ENCODE measurements at regions of chr9 and their contacts with region 1.

Region 1: DNA sequence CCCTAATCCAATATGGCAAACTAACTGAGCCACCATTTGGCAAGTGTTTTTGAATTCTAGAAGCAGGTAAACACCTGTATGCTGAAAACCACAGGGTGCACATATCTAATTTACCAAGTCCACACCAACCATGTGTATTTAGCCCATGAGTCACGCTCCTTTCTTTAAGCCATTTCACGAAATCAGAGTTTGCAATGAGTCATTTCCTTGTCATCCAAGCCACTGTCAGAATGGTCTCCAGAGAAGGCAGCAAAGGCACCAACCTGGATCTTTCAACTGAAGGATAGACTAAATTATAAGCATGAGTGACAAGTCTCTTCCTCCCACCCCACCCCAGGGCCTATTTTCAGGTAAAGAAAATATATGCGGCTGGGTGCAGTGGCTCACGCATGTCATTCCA is 110.0 kb downstream of the PAX5 start:
- DNase-seq: no peak
- H3K4me3 ChIP-seq: no peak overlapping the region
- H3K27ac ChIP-seq: no peak overlapping the region
- H3K4me1 ChIP-seq: no peaks in the 10 kb centered on the region
- H3K27me3 ChIP-seq: no peaks in the 10 kb centered on the region
- CTCF ChIP-seq: no peak
- POLR2A ChIP-seq: no peak

Region 2: GRCh38 chr9:36847781-36848673 is 76.0 kb before region 1 on chr9:
- intact Hi-C with region 1: loop called (anchors 10 kb)
- DNase-seq: no peak
- H3K4me3 ChIP-seq: no peak overlapping the region
- H3K27ac ChIP-seq: no peak overlapping the region
- H3K4me1 ChIP-seq: no peaks in the 10 kb centered on the region
- H3K27me3 ChIP-seq: no peaks in the 10 kb centered on the region
- CTCF ChIP-seq: no peak
- POLR2A ChIP-seq: no peak

Region 3: DNA sequence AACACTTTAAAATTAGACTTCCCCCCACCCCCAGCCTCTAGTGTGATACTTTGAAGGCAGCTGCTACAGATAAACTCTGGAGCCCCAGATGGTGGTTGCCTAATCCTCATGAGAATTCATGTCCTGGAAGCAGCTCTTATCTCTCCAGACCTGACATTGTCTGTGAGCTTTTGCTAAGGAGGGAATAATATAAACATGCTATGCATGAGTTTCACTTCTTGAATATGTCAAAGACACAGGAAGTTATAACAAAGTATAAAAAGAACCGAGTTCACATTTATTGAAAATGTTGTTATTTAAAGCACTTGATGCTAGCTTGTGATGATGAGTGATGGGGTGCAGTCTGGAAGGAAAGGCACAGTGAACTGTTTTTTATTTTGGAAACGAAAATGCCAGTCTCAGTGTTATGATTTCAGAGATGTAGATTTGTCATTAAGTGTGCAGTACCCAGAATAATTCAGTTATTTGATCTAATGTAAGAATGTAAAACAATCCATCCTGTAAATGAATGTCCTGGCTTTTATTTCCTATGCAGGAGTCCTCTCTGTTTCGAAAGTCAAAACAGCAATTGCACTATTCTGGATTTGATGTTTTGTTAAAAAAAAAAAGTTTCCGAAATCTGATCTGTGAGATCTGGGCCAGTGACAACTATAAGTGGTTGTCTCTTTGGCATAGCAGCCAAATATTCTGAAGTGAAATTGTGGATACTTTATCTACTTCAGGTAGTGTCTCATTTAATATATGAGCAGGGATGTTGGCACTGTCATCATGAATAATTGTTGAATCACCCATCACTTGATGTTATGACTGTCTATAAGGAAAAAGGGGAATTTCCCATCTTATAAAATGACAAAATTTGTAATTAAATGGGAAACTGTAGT is 273.3 kb after region 1 on chr9:
- intact Hi-C with region 1: no loop called
- DNase-seq: no peak
- H3K4me3 ChIP-seq: no peak overlapping the region
- H3K27ac ChIP-seq: no peak overlapping the region
- H3K4me1 ChIP-seq: peaks cover 9% of the 10 kb centered on the region
- H3K27me3 ChIP-seq: no peaks in the 10 kb centered on the region
- CTCF ChIP-seq: no peak
- POLR2A ChIP-seq: no peak

Measured in vagina (tissue), 2 donors.